ENCODE measurements at regions of chr22 and their contacts with region 1.

Region 1: DNA sequence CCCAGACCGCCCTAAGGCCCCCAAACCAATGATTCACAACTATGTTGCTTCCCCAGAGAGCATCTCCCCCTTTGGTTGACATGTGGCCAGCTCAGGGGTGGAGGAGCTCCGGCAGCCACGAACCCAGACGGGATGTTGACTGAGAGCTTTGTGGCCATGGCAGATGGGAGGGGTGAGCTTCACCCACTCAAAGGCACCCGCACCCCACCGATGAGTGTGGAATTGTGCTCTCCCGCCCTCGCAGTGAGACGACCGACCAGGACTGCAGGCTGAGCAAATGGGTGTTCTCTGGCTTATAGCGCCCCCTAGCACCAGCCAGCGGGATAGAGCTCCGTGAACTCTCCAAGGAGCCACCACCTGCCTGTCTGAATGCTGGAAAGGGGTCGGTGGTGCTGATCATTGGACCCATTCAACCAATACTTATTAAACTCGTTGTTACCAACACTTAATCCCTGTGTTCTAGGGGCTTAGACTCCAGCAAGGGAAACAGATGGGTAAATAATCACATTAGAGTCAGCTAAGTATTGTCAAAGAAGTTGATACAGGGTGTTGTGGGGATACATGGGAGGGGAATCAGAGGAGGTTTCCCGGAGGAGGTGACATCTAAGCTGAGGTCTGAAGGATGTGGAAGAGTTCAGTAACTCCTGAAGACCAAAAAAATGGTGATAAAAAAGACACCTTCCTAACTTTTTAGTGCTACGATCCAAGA is 4.5 kb upstream of the TIMP3 start:
- DNase-seq: no peak
- H3K4me3 ChIP-seq: no peak overlapping the region
- H3K27ac ChIP-seq: peak overlapping the region in 3 of 4 donors; percentile 21 to 47 (median 40)
- H3K4me1 ChIP-seq: peaks cover 18 to 35% (median 30%) of the 10 kb centered on the region in 4 donors
- H3K27me3 ChIP-seq: no peaks in the 10 kb centered on the region
- CTCF ChIP-seq: peak; percentile 87 to 95 (median 91)
- EP300 ChIP-seq: no peak
- POLR2A ChIP-seq: no peak

Region 2: DNA sequence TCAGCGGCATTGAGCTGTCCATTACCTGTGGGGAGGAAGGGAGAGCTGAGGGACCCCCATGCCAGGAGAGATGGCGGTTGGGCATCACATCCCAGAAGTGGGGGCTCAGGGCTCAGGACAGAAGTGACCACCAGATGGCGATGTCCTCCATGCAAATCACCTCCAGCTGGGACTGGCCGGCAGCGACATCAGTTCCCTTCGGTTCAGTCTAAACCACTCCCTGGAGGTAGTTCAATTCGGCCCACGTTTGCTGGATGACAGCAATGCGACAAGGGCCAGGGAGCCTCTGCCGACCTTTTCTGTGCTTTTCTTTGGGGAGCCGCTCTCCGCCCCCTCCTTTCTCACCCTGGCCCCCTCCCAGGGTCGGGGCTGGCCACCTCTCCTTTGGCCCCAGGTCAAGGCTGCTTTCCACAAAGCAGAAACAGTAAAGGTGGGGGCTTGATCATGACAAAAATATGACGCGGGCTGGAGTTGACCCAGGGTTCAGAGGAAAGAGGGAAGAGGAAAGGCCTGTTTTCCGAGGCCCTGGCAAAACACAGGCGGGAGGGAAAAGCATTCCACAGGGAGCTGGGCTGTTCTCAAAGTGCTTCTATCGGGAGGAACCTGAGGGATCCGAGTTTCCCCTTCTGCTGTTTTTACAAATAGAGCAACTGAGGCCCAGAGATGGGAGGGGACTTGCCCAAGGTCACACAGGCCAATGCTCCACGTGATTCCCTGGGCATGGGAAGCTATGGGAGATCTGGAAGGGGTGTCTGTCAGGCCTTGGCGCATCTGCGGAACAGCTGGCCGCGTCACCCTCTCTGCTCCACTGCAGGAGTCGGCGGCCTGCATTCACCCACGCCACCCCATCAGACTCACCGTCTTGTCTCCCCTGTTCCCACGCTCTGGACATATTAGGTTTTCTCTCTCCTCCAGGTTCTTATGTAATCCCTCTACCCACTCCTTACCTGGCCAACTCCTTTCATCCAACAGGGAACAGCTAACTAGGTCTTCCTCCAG is 267.7 kb before region 1 on chr22:
- intact Hi-C with region 1: loop called (anchors 1 kb)
- DNase-seq: peak; percentile 98
- H3K4me3 ChIP-seq: peak overlapping the region in 3 of 4 donors; percentile 15 to 24 (median 20)
- H3K27ac ChIP-seq: peak overlapping the region; percentile 57 to 81 (median 75)
- H3K4me1 ChIP-seq: peaks cover 49 to 59% (median 56%) of the 10 kb centered on the region in 4 donors
- H3K27me3 ChIP-seq: peaks cover 0 to 16% (median 0%) of the 10 kb centered on the region in 4 donors
- CTCF ChIP-seq: peak; percentile 86 to 91 (median 90)
- EP300 ChIP-seq: no peak
- POLR2A ChIP-seq: no peak

Region 3: GRCh38 chr22:32596471-32596870 is 200.5 kb before region 1 on chr22:
- intact Hi-C with region 1: no loop called
- DNase-seq: no peak
- H3K4me3 ChIP-seq: no peak overlapping the region
- H3K27ac ChIP-seq: no peak overlapping the region
- H3K4me1 ChIP-seq: no peaks in the 10 kb centered on the region
- H3K27me3 ChIP-seq: no peaks in the 10 kb centered on the region
- CTCF ChIP-seq: no peak
- EP300 ChIP-seq: no peak
- POLR2A ChIP-seq: no peak

Region 4: DNA sequence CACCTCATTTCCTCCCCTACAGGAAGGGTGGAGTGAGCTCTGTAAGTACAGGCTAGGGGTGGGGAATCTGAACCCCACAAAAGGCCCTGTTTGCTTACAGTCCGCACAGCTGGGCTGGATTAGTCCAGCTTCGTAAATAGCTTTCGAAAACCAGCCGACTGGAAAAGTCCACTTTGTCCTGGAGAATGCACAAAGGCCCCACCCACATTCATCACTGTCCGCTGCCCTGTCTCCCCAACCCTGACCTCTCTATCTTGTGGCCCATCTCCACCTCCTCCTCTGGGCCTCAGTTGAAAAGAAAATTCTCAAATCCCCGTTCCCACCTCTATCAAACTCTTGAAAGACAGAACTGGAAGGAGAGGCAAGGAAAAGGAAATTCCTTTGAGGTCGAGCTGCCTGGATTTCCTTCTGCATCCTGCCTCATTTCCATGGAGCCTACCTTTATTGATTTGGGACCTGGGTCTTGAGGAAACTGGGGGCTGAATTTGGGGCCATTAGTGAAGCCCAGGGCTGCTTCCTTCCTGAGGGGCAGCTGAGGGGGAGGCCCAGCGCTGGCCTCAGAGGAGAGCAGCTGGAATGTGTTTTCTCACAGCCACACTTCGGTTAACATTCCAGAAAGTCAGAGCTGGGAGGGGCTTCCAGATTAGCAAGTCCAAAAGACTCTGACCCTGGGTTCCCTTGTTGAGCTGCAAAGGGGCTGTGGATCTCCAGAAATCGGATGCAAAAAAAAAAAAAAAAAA is 174.8 kb before region 1 on chr22:
- intact Hi-C with region 1: loop called (anchors 10 kb)
- DNase-seq: no peak
- H3K4me3 ChIP-seq: peak overlapping the region in 2 of 4 donors; percentile 6 to 37
- H3K27ac ChIP-seq: peak overlapping the region; percentile 84 to 89 (median 87)
- H3K4me1 ChIP-seq: peaks cover 70 to 91% (median 85%) of the 10 kb centered on the region in 4 donors
- H3K27me3 ChIP-seq: no peaks in the 10 kb centered on the region
- CTCF ChIP-seq: no peak
- EP300 ChIP-seq: no peak
- POLR2A ChIP-seq: no peak

Region 5: DNA sequence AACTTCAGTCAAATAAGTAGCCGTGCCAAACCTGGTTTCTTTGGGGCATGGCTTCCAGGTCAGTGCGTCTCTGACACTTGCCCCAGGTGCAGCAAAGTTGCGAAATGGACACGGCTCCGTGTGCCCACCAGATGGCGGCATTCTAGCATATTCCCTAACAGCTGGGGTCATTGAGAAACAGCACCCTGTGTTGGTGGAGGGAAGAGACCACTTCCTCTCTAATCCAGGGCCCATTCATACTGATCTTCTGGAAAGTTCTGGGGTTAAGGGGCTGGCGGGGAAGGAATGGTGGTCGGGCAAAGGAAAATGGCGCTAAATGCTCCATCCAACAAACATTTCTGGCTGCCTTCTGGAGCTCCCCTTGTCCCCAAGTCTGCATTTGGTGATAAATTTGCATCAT is 136.7 kb before region 1 on chr22:
- intact Hi-C with region 1: loop called (anchors 2 kb)
- DNase-seq: no peak
- H3K4me3 ChIP-seq: no peak overlapping the region
- H3K27ac ChIP-seq: no peak overlapping the region
- H3K4me1 ChIP-seq: peaks cover 10 to 25% (median 18%) of the 10 kb centered on the region in 4 donors
- H3K27me3 ChIP-seq: peaks cover 0 to 4% (median 0%) of the 10 kb centered on the region in 4 donors
- CTCF ChIP-seq: peak; percentile 69 to 81 (median 78)
- EP300 ChIP-seq: no peak
- POLR2A ChIP-seq: no peak

Region 6: GRCh38 chr22:32846901-32847491 is 50.0 kb after region 1 on chr22:
- intact Hi-C with region 1: loop called (anchors 5 kb)
- DNase-seq: no peak
- H3K4me3 ChIP-seq: peak overlapping the region; percentile 12 to 26 (median 22)
- H3K27ac ChIP-seq: peak overlapping the region; percentile 80 to 83 (median 83)
- H3K4me1 ChIP-seq: peaks cover 94 to 100% (median 97%) of the 10 kb centered on the region in 4 donors
- H3K27me3 ChIP-seq: no peaks in the 10 kb centered on the region
- CTCF ChIP-seq: no peak
- EP300 ChIP-seq: no peak
- POLR2A ChIP-seq: no peak

Region 7: DNA sequence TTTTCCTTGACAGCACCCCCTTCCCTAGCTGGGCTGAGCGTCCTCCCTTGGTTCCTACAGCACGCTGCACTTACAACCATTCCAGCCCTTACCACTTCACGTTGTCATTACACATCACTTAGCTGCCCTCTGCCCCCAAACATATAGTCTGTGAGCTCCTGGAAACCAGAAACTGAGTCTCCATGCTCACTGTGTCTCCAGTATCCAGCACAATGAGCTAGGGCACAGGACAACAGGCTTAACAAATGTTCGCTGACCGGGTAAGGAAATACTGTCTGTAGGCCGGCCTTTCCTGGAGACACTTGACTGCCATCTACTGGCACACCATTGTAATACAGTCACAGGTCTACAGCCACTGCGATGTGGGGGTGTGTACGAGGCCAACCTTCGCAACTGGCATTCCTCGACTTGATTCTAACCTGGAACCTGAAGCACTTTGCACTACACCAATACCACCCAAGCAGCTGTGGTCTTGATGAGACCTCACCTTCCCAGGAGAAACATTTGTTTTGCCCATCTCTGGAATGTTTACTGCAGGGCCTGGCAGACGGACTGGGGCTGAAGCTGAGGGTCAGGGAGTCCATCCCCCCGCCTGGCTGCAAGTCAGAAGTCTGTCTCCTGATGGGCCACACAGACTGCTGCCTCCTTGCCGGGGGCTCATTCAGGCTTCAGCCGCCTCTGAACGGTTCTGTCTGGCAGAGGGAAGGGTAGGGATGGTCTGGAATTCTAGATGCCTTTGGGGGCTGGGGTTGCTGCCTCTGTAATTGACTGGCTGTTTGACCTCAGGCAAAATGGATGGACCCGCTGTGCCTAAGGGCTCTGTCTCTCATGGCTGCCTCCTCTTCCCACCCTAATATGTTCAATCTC is 189.1 kb after region 1 on chr22:
- intact Hi-C with region 1: loop called (anchors 2 kb)
- DNase-seq: no peak
- H3K4me3 ChIP-seq: no peak overlapping the region
- H3K27ac ChIP-seq: peak overlapping the region in 1 of 4 donors; percentile 46
- H3K4me1 ChIP-seq: peaks cover 10 to 25% (median 14%) of the 10 kb centered on the region in 4 donors
- H3K27me3 ChIP-seq: no peaks in the 10 kb centered on the region
- CTCF ChIP-seq: peak; percentile 84 to 95 (median 92)
- EP300 ChIP-seq: no peak
- POLR2A ChIP-seq: no peak

Region 8: GRCh38 chr22:33000342-33001280 is 203.6 kb after region 1 on chr22:
- intact Hi-C with region 1: loop called (anchors 5 kb)
- DNase-seq: peak; percentile 91
- H3K4me3 ChIP-seq: no peak overlapping the region
- H3K27ac ChIP-seq: no peak overlapping the region
- H3K4me1 ChIP-seq: peaks cover 8 to 29% (median 16%) of the 10 kb centered on the region in 4 donors
- H3K27me3 ChIP-seq: no peaks in the 10 kb centered on the region
- CTCF ChIP-seq: peak; percentile 88 to 93 (median 88)
- EP300 ChIP-seq: no peak
- POLR2A ChIP-seq: no peak